ENCODE measurements at regions of chr15 and their contacts with region 1.

Region 1: GRCh38 chr15:78979456-78980320 is 34.8 kb upstream of the CTSH start:
- DNase-seq: peak in 4 of 5 donors; percentile 54 to 68 (median 61)
- ATAC-seq: peak; percentile 51 to 69 (median 56)
- H3K4me3 ChIP-seq: no peak overlapping the region
- H3K27ac ChIP-seq: no peak overlapping the region
- H3K4me1 ChIP-seq: peaks cover 0 to 54% (median 7%) of the 10 kb centered on the region in 12 donors
- H3K27me3 ChIP-seq: no peaks in the 10 kb centered on the region
- CTCF ChIP-seq: peak; percentile 60 to 80 (median 70)
- POLR2A ChIP-seq: no peak

Region 2: GRCh38 chr15:78859971-78860732 is 119.5 kb before region 1 on chr15:
- intact Hi-C with region 1: loop called in 1 of 10 experiments (anchors 2 kb)
- DNase-seq: peak; percentile 43 to 78 (median 63)
- ATAC-seq: peak; percentile 65 to 94 (median 87)
- H3K4me3 ChIP-seq: peak overlapping the region in 11 of 12 donors; percentile 12 to 66 (median 50)
- H3K27ac ChIP-seq: peak overlapping the region in 9 of 12 donors; percentile 8 to 70 (median 33)
- H3K4me1 ChIP-seq: peaks cover 0 to 6% (median 0%) of the 10 kb centered on the region in 12 donors
- H3K27me3 ChIP-seq: no peaks in the 10 kb centered on the region
- CTCF ChIP-seq: peak; percentile 30 to 73 (median 59)
- POLR2A ChIP-seq: no peak

Region 3: DNA sequence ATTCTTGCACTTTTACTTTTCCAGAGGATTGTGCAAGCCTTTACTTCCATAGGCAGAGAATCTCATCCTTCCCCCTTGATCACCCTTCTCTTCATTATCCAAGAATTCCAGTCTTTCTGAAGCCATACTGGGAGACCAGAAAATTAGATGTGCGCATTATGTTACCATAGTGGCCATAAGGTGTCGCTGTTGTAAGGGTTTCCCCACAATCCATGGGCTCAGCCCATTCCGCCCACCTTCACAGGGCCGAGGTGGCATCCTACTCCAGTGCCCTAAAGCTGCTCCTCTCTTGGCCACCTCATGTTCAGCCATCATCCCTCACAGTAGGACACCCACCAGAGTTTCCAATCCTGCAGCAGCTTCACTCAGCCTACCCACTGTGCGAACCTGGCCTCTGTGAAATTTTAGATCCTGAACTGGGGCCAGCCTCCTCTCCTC is 69.9 kb before region 1 on chr15:
- intact Hi-C with region 1: loop called (anchors 1 to 10 kb)
- DNase-seq: peak in 1 of 5 donors; percentile 23
- ATAC-seq: peak in 3 of 4 donors; percentile 33 to 50 (median 42)
- H3K4me3 ChIP-seq: no peak overlapping the region
- H3K27ac ChIP-seq: no peak overlapping the region
- H3K4me1 ChIP-seq: peaks cover 0 to 59% (median 41%) of the 10 kb centered on the region in 12 donors
- H3K27me3 ChIP-seq: no peaks in the 10 kb centered on the region
- CTCF ChIP-seq: peak; percentile 54 to 74 (median 67)
- POLR2A ChIP-seq: no peak

Region 4: GRCh38 chr15:78925076-78925624 is 54.5 kb before region 1 on chr15:
- intact Hi-C with region 1: no loop called
- DNase-seq: no peak
- ATAC-seq: no peak
- H3K4me3 ChIP-seq: no peak overlapping the region
- H3K27ac ChIP-seq: no peak overlapping the region
- H3K4me1 ChIP-seq: peaks cover 0 to 10% (median 0%) of the 10 kb centered on the region in 12 donors
- H3K27me3 ChIP-seq: no peaks in the 10 kb centered on the region
- CTCF ChIP-seq: no peak
- POLR2A ChIP-seq: no peak

Region 5: GRCh38 chr15:78950904-78951840 is 28.5 kb before region 1 on chr15:
- intact Hi-C with region 1: loop called in 1 of 10 experiments (anchors 2 kb)
- DNase-seq: no peak
- ATAC-seq: peak; percentile 34 to 69 (median 50)
- H3K4me3 ChIP-seq: no peak overlapping the region
- H3K27ac ChIP-seq: peak overlapping the region in 8 of 12 donors; percentile 17 to 61 (median 48)
- H3K4me1 ChIP-seq: peaks cover 0 to 26% (median 15%) of the 10 kb centered on the region in 12 donors
- H3K27me3 ChIP-seq: no peaks in the 10 kb centered on the region
- CTCF ChIP-seq: peak in 5 of 12 donors; percentile 10 to 32 (median 22)
- POLR2A ChIP-seq: no peak

Region 6: GRCh38 chr15:79283252-79284048 is 303.8 kb after region 1 on chr15:
- intact Hi-C with region 1: no loop called
- DNase-seq: peak; percentile 28 to 68 (median 45)
- ATAC-seq: peak; percentile 64 to 95 (median 85)
- H3K4me3 ChIP-seq: no peak overlapping the region
- H3K27ac ChIP-seq: no peak overlapping the region
- H3K4me1 ChIP-seq: peaks cover 0 to 7% (median 0%) of the 10 kb centered on the region in 12 donors
- H3K27me3 ChIP-seq: peaks cover 9 to 74% (median 36%) of the 10 kb centered on the region in 9 donors
- CTCF ChIP-seq: peak in 2 of 12 donors; percentile 8 to 14
- POLR2A ChIP-seq: no peak

Measured in heart left ventricle (tissue), 16 donors.